HepG2 (cell line): ENCODE measurements at regions of chr1 and their contacts with region 1.

Region 1: GRCh38 chr1:69377507-69377906 is 190.2 kb upstream of the LRRC7 start:
- DNase-seq: no peak
- ATAC-seq: no peak
- H3K4me3 ChIP-seq: no peak overlapping the region
- H3K27ac ChIP-seq: no peak overlapping the region
- H3K4me1 ChIP-seq: no peaks in the 10 kb centered on the region; the same call in 1 of the 2 replicates
- H3K27me3 ChIP-seq: no peaks in the 10 kb centered on the region
- CTCF ChIP-seq: no peak
- EP300 ChIP-seq: no peak
- POLR2A ChIP-seq: no peak
- RAD21 ChIP-seq: no peak

Region 2: DNA sequence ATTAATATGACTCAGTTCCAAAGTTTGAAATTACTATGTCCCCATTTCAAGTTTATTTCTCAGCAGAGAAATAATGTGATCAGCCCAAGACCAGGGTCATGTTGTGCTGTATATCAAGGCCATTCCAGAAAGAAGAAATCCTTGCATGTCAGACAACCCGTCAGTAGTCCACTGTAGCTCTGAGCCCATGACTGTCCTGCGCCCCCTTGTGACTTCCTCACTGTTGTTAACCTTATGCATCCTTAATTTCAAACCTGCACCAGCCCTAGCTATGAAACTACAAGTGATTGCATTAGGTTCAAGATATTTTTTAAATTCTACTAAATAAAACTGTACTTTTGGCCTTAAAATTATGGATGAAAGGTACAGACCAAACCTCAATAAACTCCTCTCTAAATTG is 323.3 kb after region 1 on chr1:
- CTCF ChIA-PET with region 1: no interaction called
- POLR2A ChIA-PET with region 1: no interaction called
- in situ Hi-C with region 1: no loop called
- intact Hi-C with region 1: loop called (anchors 10 kb)
- DNase-seq: peak; percentile 13
- ATAC-seq: peak; percentile 82
- H3K4me3 ChIP-seq: no peak overlapping the region
- H3K27ac ChIP-seq: no peak overlapping the region
- H3K4me1 ChIP-seq: no peaks in the 10 kb centered on the region
- H3K27me3 ChIP-seq: no peaks in the 10 kb centered on the region
- CTCF ChIP-seq: peak; percentile 50
- EP300 ChIP-seq: no peak
- POLR2A ChIP-seq: no peak
- RAD21 ChIP-seq: no peak